ENCODE measurements at regions of chr9 and their contacts with region 1.

Region 1: GRCh38 chr9:12884737-12885414 is 110.1 kb downstream of the LURAP1L start:
- DNase-seq: no peak
- ATAC-seq: peak; percentile 82
- H3K4me3 ChIP-seq: no peak overlapping the region
- H3K27ac ChIP-seq: no peak overlapping the region
- H3K4me1 ChIP-seq: no peaks in the 10 kb centered on the region
- H3K27me3 ChIP-seq: no peaks in the 10 kb centered on the region

Region 2: GRCh38 chr9:12719431-12719830 is 165.4 kb before region 1 on chr9:
- intact Hi-C with region 1: loop called (anchors 2 kb)
- DNase-seq: no peak
- ATAC-seq: peak; percentile 74
- H3K4me3 ChIP-seq: no peak overlapping the region
- H3K27ac ChIP-seq: no peak overlapping the region
- H3K4me1 ChIP-seq: no peaks in the 10 kb centered on the region
- H3K27me3 ChIP-seq: no peaks in the 10 kb centered on the region

Region 3: GRCh38 chr9:12775679-12776512 is 109.0 kb before region 1 on chr9:
- intact Hi-C with region 1: loop called (anchors 2 to 10 kb)
- DNase-seq: peak; percentile 67 to 85
- ATAC-seq: peak; percentile 93
- H3K4me3 ChIP-seq: peak overlapping the region; percentile 69 to 89
- H3K27ac ChIP-seq: peak overlapping the region in 1 of 2 donors; percentile 72
- H3K4me1 ChIP-seq: peaks cover 2 to 8% of the 10 kb centered on the region in 2 donors
- H3K27me3 ChIP-seq: no peaks in the 10 kb centered on the region

Region 4: GRCh38 chr9:12819436-12820185 is 65.3 kb before region 1 on chr9:
- intact Hi-C with region 1: loop called in 1 of 2 experiments (anchors 5 kb)
- DNase-seq: no peak
- ATAC-seq: no peak
- H3K4me3 ChIP-seq: no peak overlapping the region
- H3K27ac ChIP-seq: peak overlapping the region; percentile 24 to 36
- H3K4me1 ChIP-seq: peaks cover 5% of the 10 kb centered on the region in 2 donors
- H3K27me3 ChIP-seq: no peaks in the 10 kb centered on the region

Region 5: GRCh38 chr9:12838546-12838945 is 46.3 kb before region 1 on chr9:
- intact Hi-C with region 1: loop called in 1 of 2 experiments (anchors 5 kb)
- DNase-seq: no peak
- ATAC-seq: no peak
- H3K4me3 ChIP-seq: no peak overlapping the region
- H3K27ac ChIP-seq: no peak overlapping the region
- H3K4me1 ChIP-seq: peaks cover 0 to 2% of the 10 kb centered on the region in 2 donors
- H3K27me3 ChIP-seq: no peaks in the 10 kb centered on the region

Region 6: GRCh38 chr9:12922224-12922866 is 37.5 kb after region 1 on chr9:
- intact Hi-C with region 1: loop called in 1 of 2 experiments (anchors 1 kb)
- DNase-seq: no peak
- ATAC-seq: no peak
- H3K4me3 ChIP-seq: no peak overlapping the region
- H3K27ac ChIP-seq: no peak overlapping the region
- H3K4me1 ChIP-seq: no peaks in the 10 kb centered on the region
- H3K27me3 ChIP-seq: no peaks in the 10 kb centered on the region